Cardiac septum (tissue), 1 donor: ENCODE measurements at regions of chr9 and their contacts with region 1.

Region 1: DNA sequence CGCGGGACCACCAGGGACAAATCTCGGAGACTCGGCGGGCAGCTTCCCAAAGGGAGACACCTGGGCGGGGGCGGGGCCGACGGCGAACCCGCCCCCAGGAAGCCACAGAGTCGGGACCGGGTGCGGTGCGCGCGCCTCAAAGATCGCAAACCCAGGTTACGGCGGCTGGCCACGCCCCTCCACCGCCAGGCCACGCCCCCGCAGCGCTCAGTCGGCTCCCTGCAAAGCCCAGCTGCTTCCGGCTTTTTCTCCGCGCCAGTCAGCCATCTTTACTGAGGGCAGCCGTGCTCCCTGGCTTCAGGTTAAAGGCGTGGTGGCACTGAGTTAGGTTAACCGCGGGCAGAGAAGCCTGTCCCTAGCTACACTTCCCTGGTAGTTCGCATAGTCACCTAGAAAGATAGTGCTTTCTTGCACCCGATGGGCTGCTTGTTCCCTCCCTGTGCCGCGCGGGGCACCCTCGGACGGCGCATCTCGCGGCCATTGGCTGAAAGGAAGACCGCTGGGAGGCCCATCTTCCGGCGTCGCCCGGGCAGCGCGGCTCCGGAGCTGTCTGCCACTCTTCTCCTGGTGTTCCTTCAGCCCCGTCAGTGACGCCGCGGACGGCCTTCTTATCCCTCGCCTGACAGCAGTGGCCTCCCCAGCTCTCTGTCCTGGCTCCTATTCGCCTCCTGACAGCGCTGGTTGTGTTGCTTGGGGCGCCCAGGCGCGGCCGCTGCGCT is at the start of gene TBC1D2:
- DNase-seq: peak; percentile 99
- total RNA-seq, gene TBC1D2: 2.0 TPM

Region 2: GRCh38 chr9:98056269-98057137 is 199.2 kb before region 1 on chr9 and contains the start of gene NANS:
- intact Hi-C with region 1: loop called (anchors 5 kb)
- DNase-seq: peak; percentile 97
- total RNA-seq, gene NANS: 26.3 TPM

Region 3: DNA sequence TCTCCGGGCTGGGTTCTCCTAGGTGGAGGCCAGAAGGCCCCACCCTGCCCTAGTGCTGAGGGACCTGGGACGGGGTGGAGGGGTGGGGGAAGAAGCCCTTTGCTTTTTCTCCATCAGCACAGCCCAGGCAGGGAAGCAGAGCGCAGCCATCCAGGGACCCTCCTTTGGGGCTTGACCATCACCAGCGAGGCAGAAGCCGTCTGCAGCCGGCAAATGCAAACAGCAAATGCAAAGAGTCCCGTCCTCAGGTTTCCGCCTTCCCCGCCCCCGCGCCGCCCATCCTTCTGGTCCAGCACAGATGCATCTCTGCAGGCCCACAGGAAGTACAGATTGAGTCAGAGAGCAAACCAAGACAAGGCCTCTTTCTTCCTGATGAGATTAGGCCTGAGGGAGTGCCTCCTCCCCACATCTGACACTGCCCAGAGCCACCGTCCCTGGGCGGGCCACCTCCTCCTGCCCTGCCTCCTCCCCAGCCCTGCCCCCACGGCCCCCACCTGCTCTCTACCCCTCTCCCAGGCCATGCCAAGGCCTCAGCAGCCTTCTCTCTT is 86.7 kb before region 1 on chr9:
- intact Hi-C with region 1: no loop called
- DNase-seq: no peak

Region 4: DNA sequence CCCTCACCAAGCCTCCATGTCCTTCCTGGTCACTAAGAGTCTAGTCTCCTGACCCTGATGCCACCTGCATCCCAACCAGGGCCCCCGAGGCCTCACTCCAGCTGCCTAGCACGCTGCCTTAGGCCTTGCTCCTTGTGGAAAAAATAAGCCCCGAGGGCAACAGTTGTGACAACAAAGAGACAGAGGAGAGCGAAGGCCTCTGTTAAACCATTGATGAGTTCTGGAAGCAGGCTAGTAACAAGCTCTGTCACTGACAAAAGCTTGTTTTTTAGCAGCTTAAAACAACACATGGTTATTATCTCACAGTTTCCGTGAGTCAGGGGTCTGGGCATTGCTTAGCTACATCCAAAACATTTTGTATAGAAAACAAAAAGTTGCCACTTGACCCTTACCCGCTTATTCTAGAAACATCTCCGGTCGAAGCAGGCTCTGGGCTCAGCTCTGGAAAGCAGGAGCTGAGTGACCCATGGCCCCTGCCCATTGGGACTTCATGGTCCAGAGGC is 47.9 kb after region 1 on chr9:
- intact Hi-C with region 1: no loop called
- DNase-seq: no peak